Activated CD8-positive, alpha-beta memory T cell treated with anti-CD3 and anti-CD28 coated beads, Interleukin-2, amount 10 ng/mL, durations not matched to agents 7 days and 5 days (primary cell): ENCODE measurements at regions of chr14 and their contacts with region 1.

Region 1: DNA sequence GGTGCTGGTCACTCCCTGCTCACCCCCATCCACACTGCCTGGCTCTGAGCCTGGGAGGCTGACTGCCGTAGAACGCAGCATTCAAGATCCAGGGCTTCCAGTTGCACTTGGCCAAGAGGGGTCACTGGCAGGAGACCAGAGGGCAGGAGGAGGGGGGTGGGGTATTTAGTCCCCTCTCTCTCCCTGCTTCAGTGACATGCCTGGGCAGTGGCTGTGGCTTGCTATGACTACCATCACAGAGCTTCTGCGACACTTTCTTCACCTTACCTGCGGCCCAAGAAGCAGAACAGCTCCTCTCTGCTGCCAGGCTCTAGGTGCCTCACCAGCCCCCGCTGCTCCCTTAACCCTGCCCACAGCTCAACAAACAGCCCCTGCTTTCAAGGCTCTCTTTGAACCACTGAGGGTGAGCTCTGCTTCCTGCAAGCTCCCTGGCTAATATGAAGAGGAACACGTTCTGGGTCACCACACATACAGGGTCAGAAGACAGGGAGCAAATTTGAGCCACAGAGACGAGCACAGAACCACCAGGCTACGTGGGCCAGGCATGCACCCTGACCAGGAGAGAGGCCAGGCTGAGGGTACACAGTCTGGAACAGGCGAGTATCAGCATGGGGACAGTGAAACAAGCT is 55.7 kb downstream of the ITPK1 start:
- DNase-seq: peak; percentile 57
- ATAC-seq: peak; percentile 59
- H3K4me3 Mint-ChIP-seq: peak overlapping the region; percentile 1
- H3K27ac Mint-ChIP-seq: peak overlapping the region; percentile 81
- H3K4me1 Mint-ChIP-seq: peaks cover 53% of the 10 kb centered on the region
- H3K27me3 Mint-ChIP-seq: no peaks in the 10 kb centered on the region

Region 2: GRCh38 chr14:93042968-93043940 is 16.8 kb before region 1 on chr14:
- CTCF ChIA-PET with region 1: no interaction called
- DNase-seq: no peak
- ATAC-seq: no peak
- H3K4me3 Mint-ChIP-seq: no peak overlapping the region
- H3K27ac Mint-ChIP-seq: peak overlapping the region; percentile 56
- H3K4me1 Mint-ChIP-seq: peaks cover 56% of the 10 kb centered on the region
- H3K27me3 Mint-ChIP-seq: no peaks in the 10 kb centered on the region

Region 3: GRCh38 chr14:93090826-93091555 is 31.0 kb after region 1 on chr14:
- CTCF ChIA-PET with region 1: no interaction called
- DNase-seq: no peak
- ATAC-seq: no peak
- H3K4me3 Mint-ChIP-seq: no peak overlapping the region
- H3K27ac Mint-ChIP-seq: no peak overlapping the region
- H3K4me1 Mint-ChIP-seq: peaks cover 35% of the 10 kb centered on the region
- H3K27me3 Mint-ChIP-seq: no peaks in the 10 kb centered on the region

Region 4: DNA sequence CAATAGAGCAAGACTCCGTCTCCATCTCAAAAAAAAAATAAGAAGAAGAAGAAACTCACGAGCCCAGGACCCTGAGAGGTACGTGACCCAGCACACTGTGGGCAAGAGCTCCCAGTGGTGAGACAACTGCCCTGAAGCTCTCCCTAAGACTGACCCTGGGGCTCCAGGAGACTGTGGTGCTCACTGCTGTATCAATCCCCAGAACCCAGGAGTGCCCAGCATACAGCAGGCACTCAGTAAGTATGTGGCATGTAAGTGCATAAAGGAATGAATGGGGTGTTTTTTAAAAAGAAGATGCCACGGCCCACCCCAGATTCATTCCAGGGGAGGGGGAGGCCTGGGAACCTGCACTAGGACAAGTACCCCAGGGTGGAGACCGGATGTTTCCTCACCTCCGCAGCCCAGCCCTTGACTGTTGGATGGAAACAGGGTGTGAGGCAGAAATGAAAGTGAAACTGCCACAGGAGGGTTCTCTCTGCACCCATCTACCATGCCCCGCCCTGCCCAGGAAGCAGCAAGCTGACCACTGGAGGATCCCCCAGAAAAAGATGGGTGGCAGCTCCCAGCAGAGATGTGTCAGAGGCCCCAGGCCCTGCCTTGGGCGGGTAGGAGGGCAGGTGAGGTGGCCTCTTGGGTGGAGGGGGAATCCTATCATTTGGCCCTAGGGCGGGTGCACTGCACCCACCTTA is 43.5 kb after region 1 on chr14:
- CTCF ChIA-PET with region 1: interaction called, 20 read pairs
- DNase-seq: peak; percentile 95
- ATAC-seq: peak; percentile 99
- H3K4me3 Mint-ChIP-seq: peak overlapping the region; percentile 76
- H3K27ac Mint-ChIP-seq: peak overlapping the region; percentile 98
- H3K4me1 Mint-ChIP-seq: peaks cover 52% of the 10 kb centered on the region
- H3K27me3 Mint-ChIP-seq: no peaks in the 10 kb centered on the region